ENCODE measurements at regions of chr14 and their contacts with region 1.

Region 1: GRCh38 chr14:54773171-54773975 is 129.3 kb downstream of the GCH1 start:
- DNase-seq: peak; percentile 86
- H3K4me3 Mint-ChIP-seq: peak overlapping the region; percentile 27
- H3K27ac Mint-ChIP-seq: peak overlapping the region; percentile 79
- H3K4me1 Mint-ChIP-seq: peaks cover 50% of the 10 kb centered on the region
- H3K27me3 Mint-ChIP-seq: peaks cover 33% of the 10 kb centered on the region

Region 2: DNA sequence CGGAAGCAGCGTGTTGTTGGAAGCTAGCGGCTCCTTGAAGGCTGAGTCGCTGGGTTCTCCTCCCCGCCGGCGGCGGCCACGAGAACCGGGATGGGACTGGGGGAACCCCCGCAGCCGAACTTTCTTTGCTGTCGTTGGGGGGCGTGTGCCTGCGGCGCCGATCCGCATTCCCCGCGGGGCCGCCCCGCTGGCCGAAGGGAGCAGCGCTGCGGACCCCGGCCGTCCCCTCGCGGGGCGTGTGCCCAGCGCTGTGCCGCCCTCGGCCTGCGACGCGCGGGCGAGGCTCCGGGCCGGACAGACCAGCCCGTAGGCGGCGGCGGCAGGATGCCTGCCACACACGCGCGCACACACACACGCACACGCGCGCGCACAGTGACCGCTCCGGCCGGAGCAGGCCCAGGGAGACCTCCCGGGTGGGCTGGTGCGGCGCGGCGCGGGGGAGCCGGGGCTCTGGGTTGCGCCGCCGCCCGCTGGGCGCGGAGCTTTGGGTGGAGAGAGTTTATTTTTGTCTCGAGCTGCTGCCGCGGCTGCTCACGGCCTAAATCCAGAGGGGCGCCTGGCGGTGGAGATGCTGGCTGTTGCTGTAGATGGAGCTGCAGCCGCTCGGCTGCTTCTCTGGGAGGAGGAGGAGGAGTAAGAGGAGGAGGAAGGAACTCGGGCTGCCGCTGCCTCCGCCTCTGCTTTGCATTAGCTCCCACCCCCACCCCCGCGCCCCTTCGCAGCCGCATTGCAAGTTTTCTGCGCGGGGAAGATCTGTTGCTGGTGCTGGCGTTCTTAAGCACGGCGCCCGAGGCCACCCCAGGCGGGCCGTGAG is 206.8 kb before region 1 on chr14 and contains the start of gene SAMD4A:
- CTCF ChIA-PET with region 1: interaction called, 221 read pairs
- DNase-seq: peak; percentile 72
- H3K4me3 Mint-ChIP-seq: peak within 1 kb of the TSS; percentile 89
- H3K27ac Mint-ChIP-seq: peak within 1 kb of the TSS; percentile 69
- H3K4me1 Mint-ChIP-seq: peaks cover 21% of the 10 kb centered on the region
- H3K27me3 Mint-ChIP-seq: peaks cover 49% of the 10 kb centered on the region

Region 3: DNA sequence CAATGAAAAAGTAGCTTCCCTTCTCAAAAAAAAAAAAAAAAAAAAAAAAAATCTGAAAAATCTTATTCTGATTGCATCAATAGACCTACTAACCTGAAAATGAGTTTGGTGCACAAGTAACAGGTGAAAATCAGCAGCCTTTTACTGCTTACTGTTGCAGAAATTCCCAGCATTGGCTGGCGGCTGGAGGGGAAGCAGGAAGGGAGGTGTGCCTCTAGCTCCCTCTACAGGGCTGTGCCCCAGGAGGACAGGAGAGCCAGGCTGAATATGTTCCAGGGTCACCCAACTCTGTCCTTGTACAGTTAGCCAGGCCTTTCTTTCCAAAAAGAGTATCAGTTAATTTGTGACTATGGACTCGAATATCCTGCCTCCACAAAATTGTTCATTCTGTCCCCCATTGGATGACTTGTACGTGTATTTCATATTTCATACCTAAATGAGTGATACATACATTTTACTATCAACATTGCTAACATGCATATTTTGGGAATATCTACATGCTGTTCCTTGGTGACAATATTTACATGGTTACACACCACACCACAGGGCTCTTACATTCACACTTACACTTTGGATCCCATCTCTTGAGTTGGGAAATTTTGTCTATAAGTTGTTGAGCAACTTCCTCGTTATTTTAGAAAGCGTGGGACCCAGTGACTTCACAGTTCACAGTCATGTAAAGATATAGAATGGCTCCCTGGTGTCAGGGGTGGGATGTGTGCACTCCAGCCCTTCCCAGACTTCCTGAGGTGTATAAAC is 81.7 kb before region 1 on chr14:
- CTCF ChIA-PET with region 1: interaction called, 25 read pairs
- DNase-seq: peak; percentile 59
- H3K4me3 Mint-ChIP-seq: no peak overlapping the region
- H3K27ac Mint-ChIP-seq: no peak overlapping the region
- H3K4me1 Mint-ChIP-seq: no peaks in the 10 kb centered on the region
- H3K27me3 Mint-ChIP-seq: peaks cover 32% of the 10 kb centered on the region

Region 4: DNA sequence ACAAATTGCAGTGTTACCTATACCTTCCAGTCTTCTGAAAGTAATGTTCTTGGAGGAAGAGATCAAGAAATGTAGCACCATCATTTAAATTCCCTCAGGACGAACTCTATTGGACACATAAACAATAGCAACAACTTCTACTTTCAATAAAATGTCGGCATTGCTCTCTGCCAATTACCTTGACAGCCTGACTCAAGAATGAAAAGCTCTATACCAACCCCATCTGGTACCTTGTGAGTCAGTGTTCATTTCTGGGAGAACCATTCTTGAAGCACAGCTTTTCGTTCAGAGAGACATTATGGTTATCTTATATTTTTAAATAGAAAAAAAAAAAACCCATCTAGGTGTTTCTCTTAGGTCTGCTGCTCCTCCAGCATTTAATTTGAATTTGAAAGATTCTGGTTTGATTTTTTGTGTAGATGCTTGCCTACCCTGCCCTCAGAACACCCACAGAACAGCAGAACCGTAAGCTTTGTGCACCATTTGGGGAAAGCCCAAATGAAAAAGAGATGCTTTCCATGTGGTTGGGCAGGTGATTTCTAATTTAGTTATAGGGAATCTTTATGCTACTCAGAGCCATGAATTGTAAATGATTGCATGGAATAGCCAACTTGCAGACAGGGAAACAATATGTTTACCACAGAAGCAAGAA is 50.5 kb before region 1 on chr14:
- CTCF ChIA-PET with region 1: interaction called, 57 read pairs
- DNase-seq: peak; percentile 33
- H3K4me3 Mint-ChIP-seq: no peak overlapping the region
- H3K27ac Mint-ChIP-seq: no peak overlapping the region
- H3K4me1 Mint-ChIP-seq: peaks cover 14% of the 10 kb centered on the region
- H3K27me3 Mint-ChIP-seq: peaks cover 28% of the 10 kb centered on the region

Region 5: GRCh38 chr14:54756656-54757392 is 16.5 kb before region 1 on chr14:
- CTCF ChIA-PET with region 1: interaction called, 10 read pairs
- DNase-seq: peak; percentile 17
- H3K4me3 Mint-ChIP-seq: no peak overlapping the region
- H3K27ac Mint-ChIP-seq: no peak overlapping the region
- H3K4me1 Mint-ChIP-seq: peaks cover 24% of the 10 kb centered on the region
- H3K27me3 Mint-ChIP-seq: peaks cover 24% of the 10 kb centered on the region

Region 6: GRCh38 chr14:54805521-54806322 is 32.3 kb after region 1 on chr14:
- CTCF ChIA-PET with region 1: interaction called, 62 read pairs
- DNase-seq: peak; percentile 85
- H3K4me3 Mint-ChIP-seq: no peak overlapping the region
- H3K27ac Mint-ChIP-seq: no peak overlapping the region
- H3K4me1 Mint-ChIP-seq: peaks cover 4% of the 10 kb centered on the region
- H3K27me3 Mint-ChIP-seq: peaks cover 56% of the 10 kb centered on the region

Region 7: DNA sequence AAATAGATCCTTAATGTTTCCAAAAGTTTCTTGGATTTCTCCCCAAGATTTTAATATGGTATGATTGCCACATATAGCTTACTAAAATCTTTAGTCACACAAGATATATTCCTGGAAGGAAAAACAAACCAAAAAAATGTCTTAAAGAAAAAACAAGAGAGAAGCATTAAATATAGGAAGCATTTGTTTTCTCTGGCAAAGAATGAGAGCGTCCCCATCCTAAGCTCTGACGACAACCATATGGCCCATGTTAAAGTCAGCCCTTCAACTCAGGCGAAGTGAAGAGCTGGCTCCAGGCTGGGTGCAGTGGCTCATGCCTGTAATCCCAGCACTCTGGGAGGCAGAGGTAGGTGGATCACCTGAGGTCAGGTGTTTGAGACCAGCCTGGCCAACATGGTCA is 93.6 kb after region 1 on chr14:
- CTCF ChIA-PET with region 1: no interaction called
- DNase-seq: no peak
- H3K4me3 Mint-ChIP-seq: no peak overlapping the region
- H3K27ac Mint-ChIP-seq: no peak overlapping the region
- H3K4me1 Mint-ChIP-seq: peaks cover 32% of the 10 kb centered on the region
- H3K27me3 Mint-ChIP-seq: no peaks in the 10 kb centered on the region

Region 8: GRCh38 chr14:54881235-54881760 is 107.9 kb after region 1 on chr14:
- CTCF ChIA-PET with region 1: no interaction called
- DNase-seq: peak; percentile 52
- H3K4me3 Mint-ChIP-seq: peak overlapping the region; percentile 76
- H3K27ac Mint-ChIP-seq: peak overlapping the region; percentile 97
- H3K4me1 Mint-ChIP-seq: peaks cover 54% of the 10 kb centered on the region
- H3K27me3 Mint-ChIP-seq: no peaks in the 10 kb centered on the region